ENCODE measurements at regions of chr5 and their contacts with region 1.

Region 1: DNA sequence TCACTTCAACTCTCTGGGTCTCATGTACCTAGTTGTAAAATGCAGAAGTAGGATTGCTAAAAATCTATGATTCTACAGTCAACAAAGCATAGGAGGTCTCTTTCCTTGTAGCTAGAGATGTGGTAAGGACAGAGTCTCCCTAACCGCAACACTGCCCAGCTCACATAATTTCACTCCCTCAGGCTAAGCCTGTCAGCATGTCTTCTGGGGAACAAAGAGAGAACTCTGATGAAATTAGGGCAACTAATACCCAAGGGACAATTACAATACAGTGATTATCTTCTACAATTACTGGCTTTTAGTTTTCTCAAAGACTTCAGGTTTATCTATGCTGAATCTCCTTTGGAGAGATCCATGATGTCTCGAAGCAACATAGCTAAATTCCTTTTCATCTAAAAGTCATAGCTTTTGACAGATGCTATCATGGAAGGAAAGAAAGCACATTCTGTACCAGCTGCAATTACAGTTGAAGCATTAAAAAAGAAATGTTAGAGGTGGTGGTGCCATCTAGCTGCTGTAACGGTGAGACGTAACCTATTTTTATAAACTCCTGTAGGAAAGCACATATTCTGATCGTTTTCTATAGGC is 141.1 kb upstream of the TARS1 start:
- DNase-seq: no peak
- H3K4me3 ChIP-seq: no peak overlapping the region
- H3K27ac ChIP-seq: no peak overlapping the region
- H3K4me1 ChIP-seq: peaks cover 0 to 3% (median 1%) of the 10 kb centered on the region in 4 experiments; a peak in 2 of 7 replicates
- H3K27me3 ChIP-seq: no peaks in the 10 kb centered on the region
- CTCF ChIP-seq: peak in 1 of 3 experiments; percentile 51; a peak in 2 of 4 replicates
- EP300 ChIP-seq: no peak
- POLR2A ChIP-seq: no peak
- RAD21 ChIP-seq: peak; percentile 58 to 59

Region 2: DNA sequence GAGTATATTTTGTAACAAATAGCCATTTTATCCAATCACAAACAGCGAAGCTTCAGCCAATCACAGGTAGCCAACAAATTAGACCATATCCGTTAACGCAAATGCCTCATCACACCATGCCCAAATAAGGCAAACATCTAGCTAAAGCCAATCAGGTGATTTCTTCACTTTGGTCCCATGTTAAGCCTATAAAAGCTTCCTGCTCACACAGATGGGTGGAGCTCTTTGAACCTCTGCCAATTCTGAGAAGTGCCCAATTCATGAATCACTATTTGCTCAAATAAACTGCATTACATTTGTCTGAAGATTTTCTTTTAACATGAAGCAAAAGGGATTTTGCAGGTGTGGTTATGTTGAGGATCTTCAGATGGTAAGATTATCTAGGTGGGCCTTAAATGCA is 13.4 kb after region 1 on chr5:
- CTCF ChIA-PET with region 1: interaction called, 22 read pairs
- POLR2A ChIA-PET with region 1: no interaction called
- DNase-seq: no peak
- H3K4me3 ChIP-seq: no peak overlapping the region
- H3K27ac ChIP-seq: no peak overlapping the region
- H3K4me1 ChIP-seq: no peaks in the 10 kb centered on the region
- H3K27me3 ChIP-seq: no peaks in the 10 kb centered on the region
- CTCF ChIP-seq: no peak
- EP300 ChIP-seq: no peak
- POLR2A ChIP-seq: no peak
- RAD21 ChIP-seq: no peak

Region 3: DNA sequence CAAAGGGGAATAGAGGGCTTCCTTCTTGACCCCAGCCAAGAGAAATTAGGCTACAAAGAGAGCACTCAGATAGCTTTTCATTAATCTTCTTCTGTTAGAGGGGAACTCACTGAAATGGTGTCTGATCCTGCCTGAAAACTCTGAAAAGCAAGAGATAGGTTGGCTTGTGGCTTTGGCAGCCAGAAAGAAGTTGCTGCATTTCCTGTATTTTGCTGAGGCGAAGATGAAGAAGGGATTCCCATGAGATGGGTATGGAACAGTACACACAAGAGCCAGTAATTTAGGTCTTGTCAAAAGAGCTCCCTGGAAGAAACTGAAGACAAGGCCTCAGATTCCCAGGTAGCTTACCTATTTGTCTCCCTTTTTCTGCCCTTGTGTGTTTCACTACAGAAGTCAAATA is 20.1 kb after region 1 on chr5:
- CTCF ChIA-PET with region 1: interaction called, 15 read pairs
- POLR2A ChIA-PET with region 1: no interaction called
- DNase-seq: no peak
- H3K4me3 ChIP-seq: no peak overlapping the region
- H3K27ac ChIP-seq: no peak overlapping the region
- H3K4me1 ChIP-seq: peaks cover 0 to 3% (median 0%) of the 10 kb centered on the region in 4 experiments; a peak in 1 of 7 replicates
- H3K27me3 ChIP-seq: no peaks in the 10 kb centered on the region
- CTCF ChIP-seq: no peak
- EP300 ChIP-seq: no peak
- POLR2A ChIP-seq: no peak
- RAD21 ChIP-seq: no peak

Region 4: DNA sequence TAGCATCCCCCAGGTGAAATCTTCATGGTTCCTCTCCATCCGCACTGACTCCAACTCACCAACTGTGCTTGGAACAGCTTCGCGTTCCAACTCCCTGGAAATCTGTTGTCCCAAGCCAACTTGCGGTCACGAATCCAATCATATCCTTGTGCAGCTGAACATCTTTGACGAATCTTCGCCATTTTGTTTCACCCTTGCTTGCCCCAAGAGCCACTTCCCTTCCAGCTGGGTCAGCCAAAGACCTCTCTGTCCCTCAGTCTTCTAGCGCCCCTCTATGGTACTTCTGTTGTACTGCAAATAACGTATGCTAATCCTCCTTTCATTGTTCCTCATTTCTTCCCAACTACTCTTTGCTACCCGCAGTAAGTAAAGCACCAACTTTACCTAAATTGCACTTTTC is 80.0 kb after region 1 on chr5:
- CTCF ChIA-PET with region 1: interaction called, 13 read pairs
- POLR2A ChIA-PET with region 1: no interaction called
- DNase-seq: peak in 1 of 2 experiments; percentile 58
- H3K4me3 ChIP-seq: no peak overlapping the region
- H3K27ac ChIP-seq: no peak overlapping the region
- H3K4me1 ChIP-seq: no peaks in the 10 kb centered on the region
- H3K27me3 ChIP-seq: no peaks in the 10 kb centered on the region
- CTCF ChIP-seq: peak; percentile 44 to 94 (median 84)
- EP300 ChIP-seq: no peak
- POLR2A ChIP-seq: no peak
- RAD21 ChIP-seq: peak; percentile 99